Aorta (tissue), 5 donors: ENCODE measurements at regions of chr5 and their contacts with region 1.

Region 1: GRCh38 chr5:31066655-31067328 is 126.7 kb upstream of the CDH6 start:
- DNase-seq: no peak
- ATAC-seq: no peak
- H3K4me3 ChIP-seq: no peak overlapping the region
- H3K27ac ChIP-seq: no peak overlapping the region
- H3K4me1 ChIP-seq: peaks cover 3 to 4% of the 10 kb centered on the region in 2 donors
- H3K27me3 ChIP-seq: no peaks in the 10 kb centered on the region

Region 2: DNA sequence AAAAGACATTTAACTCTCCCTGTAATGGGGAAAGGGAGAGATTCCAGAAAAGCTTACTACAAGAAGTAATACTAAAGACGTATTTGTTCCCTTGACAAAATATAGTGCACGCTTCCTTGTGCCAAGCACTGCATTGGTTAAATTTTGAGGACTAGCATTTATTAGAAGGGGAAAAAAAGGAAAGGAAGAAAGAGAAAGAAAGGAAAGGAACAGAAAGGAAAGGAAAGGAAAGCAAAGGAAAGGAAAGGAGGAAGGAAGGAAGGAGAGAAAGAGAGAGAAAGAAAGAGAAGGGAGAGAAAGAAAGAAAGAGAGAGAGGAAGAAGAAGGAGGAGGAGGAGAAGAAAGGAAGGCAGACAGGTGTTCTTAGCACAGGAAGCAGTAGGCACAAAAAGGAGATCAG is 16.6 kb after region 1 on chr5:
- intact Hi-C with region 1: loop called in 1 of 2 experiments (anchors 1 kb)
- DNase-seq: no peak
- ATAC-seq: no peak
- H3K4me3 ChIP-seq: no peak overlapping the region
- H3K27ac ChIP-seq: no peak overlapping the region
- H3K4me1 ChIP-seq: no peaks in the 10 kb centered on the region
- H3K27me3 ChIP-seq: no peaks in the 10 kb centered on the region